IMR-90 (cell line): ENCODE measurements at regions of chr14 and their contacts with region 1.

Region 1: DNA sequence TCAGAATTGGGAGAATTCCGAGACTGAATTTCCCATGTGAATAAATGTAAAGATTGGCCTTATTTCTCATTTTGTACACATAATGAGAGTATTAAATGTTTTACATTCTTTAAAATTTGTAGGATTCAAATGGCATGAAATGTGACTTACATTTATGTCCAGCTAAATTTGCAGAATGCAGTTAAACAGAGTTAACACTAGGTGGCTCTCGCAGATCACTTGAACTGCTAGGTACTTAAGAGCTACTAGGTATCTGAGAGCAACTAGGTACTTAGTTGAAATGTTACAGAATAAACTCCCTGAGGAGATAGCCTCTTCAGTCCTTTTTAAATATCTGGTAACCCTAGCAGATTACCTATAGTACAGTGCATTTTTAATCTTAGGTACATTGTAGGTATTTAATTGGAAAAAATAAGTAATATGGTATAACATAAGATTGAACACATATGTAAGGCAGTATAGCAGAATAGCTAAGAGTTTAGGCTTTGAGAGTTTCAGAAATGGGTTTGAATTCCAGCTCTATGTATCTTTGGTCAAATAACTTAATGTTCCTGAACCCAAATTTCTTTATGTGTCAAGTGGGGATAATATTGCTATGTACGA is 73.8 kb downstream of the KIAA0586 start:
- DNase-seq: peak; percentile 88
- ATAC-seq: peak; percentile 89
- H3K4me3 ChIP-seq: no peak overlapping the region
- H3K27ac ChIP-seq: no peak overlapping the region
- H3K4me1 ChIP-seq: no peaks in the 10 kb centered on the region
- H3K27me3 ChIP-seq: no peaks in the 10 kb centered on the region
- CTCF ChIP-seq: peak; percentile 93
- POLR2A ChIP-seq: no peak
- RAD21 ChIP-seq: peak; percentile 96

Region 2: DNA sequence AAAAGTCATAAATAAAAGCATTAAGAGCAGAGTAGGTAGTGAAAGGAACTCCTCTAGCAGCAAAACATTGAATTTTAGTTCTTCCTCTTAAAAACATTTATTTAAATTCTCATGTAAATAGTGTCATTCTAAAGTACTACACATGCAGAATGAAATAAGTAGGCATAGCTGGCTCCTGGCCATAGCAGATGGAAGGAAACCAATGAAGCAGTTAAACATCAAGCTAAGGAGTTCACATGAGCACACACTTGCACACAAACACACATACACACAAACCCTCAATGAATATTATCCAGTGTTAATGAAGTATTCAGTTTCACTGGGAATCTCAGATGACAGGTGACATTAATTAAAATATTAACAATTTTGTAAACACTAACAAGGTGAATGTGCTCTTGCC is 704.8 kb before region 1 on chr14:
- CTCF ChIA-PET with region 1: no interaction called
- POLR2A ChIA-PET with region 1: no interaction called
- dilution Hi-C with region 1: no loop called
- in situ Hi-C with region 1: no loop called
- intact Hi-C with region 1: no loop called
- DNase-seq: no peak
- ATAC-seq: no peak
- H3K4me3 ChIP-seq: no peak overlapping the region
- H3K27ac ChIP-seq: no peak overlapping the region
- H3K4me1 ChIP-seq: no peaks in the 10 kb centered on the region
- H3K27me3 ChIP-seq: no peaks in the 10 kb centered on the region
- CTCF ChIP-seq: no peak
- POLR2A ChIP-seq: no peak
- RAD21 ChIP-seq: no peak

Region 3: GRCh38 chr14:58659846-58660245 is 158.5 kb after region 1 on chr14:
- CTCF ChIA-PET with region 1: no interaction called
- POLR2A ChIA-PET with region 1: no interaction called
- dilution Hi-C with region 1: no loop called
- in situ Hi-C with region 1: no loop called
- intact Hi-C with region 1: no loop called
- DNase-seq: no peak
- ATAC-seq: no peak
- H3K4me3 ChIP-seq: no peak overlapping the region
- H3K27ac ChIP-seq: no peak overlapping the region
- H3K4me1 ChIP-seq: peaks cover 4% of the 10 kb centered on the region; the same call in 1 of the 2 replicates
- H3K27me3 ChIP-seq: no peaks in the 10 kb centered on the region; the same call in 1 of the 2 replicates
- CTCF ChIP-seq: no peak
- POLR2A ChIP-seq: no peak
- RAD21 ChIP-seq: no peak

Region 4: GRCh38 chr14:59020382-59020781 is 519.1 kb after region 1 on chr14:
- CTCF ChIA-PET with region 1: no interaction called
- POLR2A ChIA-PET with region 1: no interaction called
- dilution Hi-C with region 1: no loop called
- in situ Hi-C with region 1: no loop called
- intact Hi-C with region 1: loop called (anchors 2 kb)
- DNase-seq: peak; percentile 46
- ATAC-seq: peak; percentile 86
- H3K4me3 ChIP-seq: no peak overlapping the region
- H3K27ac ChIP-seq: no peak overlapping the region
- H3K4me1 ChIP-seq: no peaks in the 10 kb centered on the region
- H3K27me3 ChIP-seq: no peaks in the 10 kb centered on the region
- CTCF ChIP-seq: peak; percentile 56
- POLR2A ChIP-seq: no peak
- RAD21 ChIP-seq: peak; percentile 55

Region 5: DNA sequence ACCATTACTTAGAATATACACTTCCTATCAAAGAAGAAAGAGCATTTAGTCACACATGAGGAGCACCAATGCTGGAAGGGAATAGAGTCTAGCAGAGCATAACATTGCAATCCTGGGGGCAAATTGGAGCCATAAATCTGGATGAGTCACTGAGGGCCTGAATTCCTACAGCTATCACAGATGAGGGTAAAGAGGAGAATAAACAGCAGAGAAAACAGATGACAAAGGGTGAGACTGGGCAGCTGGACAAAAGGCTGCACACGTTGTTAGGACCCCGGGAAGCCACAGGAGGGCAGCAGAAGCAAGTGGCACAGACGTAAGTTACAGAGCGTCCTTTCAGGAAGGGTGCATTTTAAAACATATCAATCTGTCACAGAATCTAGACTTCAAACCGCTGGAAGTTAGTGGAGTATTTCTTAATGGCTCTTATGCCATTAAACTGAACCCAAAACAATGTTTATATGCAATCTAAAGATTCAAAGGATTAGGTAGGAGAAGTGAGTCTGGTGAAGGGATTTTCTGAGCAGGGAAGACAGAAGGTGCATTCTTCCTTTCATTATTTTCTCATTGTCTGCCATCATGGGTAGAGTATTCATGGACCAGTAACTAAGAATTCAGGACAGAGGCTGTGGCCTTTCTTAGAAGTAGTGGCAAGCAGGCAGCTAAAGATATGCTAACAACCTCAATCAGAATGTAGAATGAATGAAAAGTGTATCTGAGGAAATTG is 527.3 kb after region 1 on chr14:
- CTCF ChIA-PET with region 1: no interaction called
- POLR2A ChIA-PET with region 1: no interaction called
- dilution Hi-C with region 1: no loop called
- in situ Hi-C with region 1: no loop called
- intact Hi-C with region 1: loop called (anchors 2 kb)
- DNase-seq: peak; percentile 97
- ATAC-seq: peak; percentile 99
- H3K4me3 ChIP-seq: no peak overlapping the region
- H3K27ac ChIP-seq: no peak overlapping the region
- H3K4me1 ChIP-seq: no peaks in the 10 kb centered on the region
- H3K27me3 ChIP-seq: no peaks in the 10 kb centered on the region
- CTCF ChIP-seq: peak; percentile 95
- POLR2A ChIP-seq: no peak
- RAD21 ChIP-seq: peak; percentile 89

Region 6: DNA sequence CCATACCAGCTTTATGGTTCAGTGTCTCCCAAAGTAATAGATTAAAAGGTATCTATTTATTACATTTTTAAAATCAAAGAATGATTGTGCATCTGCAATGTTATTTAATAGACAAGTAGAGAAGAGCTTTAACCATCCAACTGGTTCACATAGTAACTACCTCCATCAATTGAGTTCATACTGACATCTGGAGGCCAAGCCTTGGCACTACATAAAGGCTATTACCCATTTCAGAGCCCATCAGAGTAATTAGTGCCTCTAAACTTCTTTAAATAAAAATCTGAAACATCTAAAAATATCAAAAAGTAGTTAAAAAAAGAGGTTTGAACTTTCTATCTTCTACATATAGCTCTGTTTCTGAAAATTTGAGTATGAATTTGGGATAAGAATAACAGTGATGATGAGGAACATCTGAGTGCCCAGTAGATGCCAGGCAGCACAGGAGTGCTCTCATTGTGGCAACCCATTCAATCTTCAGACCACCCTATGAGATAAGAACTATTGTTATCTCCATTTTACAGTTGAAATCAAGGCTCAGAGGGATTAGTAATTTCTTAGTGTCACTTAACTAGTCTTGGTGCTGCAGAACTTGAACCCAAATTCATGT is 554.2 kb after region 1 on chr14:
- CTCF ChIA-PET with region 1: interaction called, 15 read pairs
- POLR2A ChIA-PET with region 1: no interaction called
- dilution Hi-C with region 1: no loop called
- in situ Hi-C with region 1: loop called (anchors 10 kb)
- intact Hi-C with region 1: loop called (anchors 1 kb)
- DNase-seq: peak; percentile 72
- ATAC-seq: peak; percentile 93
- H3K4me3 ChIP-seq: no peak overlapping the region
- H3K27ac ChIP-seq: no peak overlapping the region
- H3K4me1 ChIP-seq: no peaks in the 10 kb centered on the region
- H3K27me3 ChIP-seq: peaks cover 1% of the 10 kb centered on the region; the same call in 1 of the 2 replicates
- CTCF ChIP-seq: peak; percentile 88
- POLR2A ChIP-seq: no peak
- RAD21 ChIP-seq: peak; percentile 91

Region 7: DNA sequence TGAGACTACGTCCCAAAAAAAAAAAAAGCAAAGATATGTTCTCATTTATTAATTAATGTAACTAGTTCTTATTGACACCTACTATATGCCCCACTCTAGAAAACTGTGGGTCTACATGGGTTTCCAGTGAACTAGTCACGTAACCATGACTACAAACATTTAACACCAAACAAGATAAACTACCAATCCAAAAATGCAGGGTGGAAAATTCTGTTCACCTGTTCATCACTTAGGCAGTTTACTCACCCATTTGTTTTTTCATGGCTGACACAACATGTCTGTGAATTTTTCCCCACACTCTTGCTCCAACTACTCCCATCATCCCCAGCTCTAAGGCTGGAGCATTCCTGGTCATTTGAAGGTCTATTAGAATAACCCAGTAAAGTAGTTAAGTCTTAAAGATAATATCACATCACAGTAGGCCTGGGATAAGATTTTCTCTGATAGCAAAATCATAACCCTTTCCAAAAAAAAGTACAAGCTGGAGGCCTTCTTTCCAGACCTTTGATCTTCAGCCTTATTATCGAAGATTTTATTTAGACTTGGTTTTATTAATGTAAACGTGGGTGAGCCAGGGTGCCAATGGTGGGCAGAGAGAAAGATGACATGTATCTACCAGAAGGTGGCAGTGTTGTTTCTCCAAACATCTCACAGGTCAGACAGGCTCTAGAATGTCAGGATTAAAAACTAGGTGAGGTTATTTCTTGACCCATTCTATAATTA is 625.6 kb after region 1 on chr14:
- CTCF ChIA-PET with region 1: interaction called, 5 read pairs
- POLR2A ChIA-PET with region 1: no interaction called
- dilution Hi-C with region 1: no loop called
- in situ Hi-C with region 1: loop called (anchors 5 kb)
- intact Hi-C with region 1: loop called (anchors 2 kb)
- DNase-seq: peak; percentile 64
- ATAC-seq: peak; percentile 90
- H3K4me3 ChIP-seq: no peak overlapping the region
- H3K27ac ChIP-seq: no peak overlapping the region
- H3K4me1 ChIP-seq: no peaks in the 10 kb centered on the region; the same call in 1 of the 2 replicates
- H3K27me3 ChIP-seq: peaks cover 2% of the 10 kb centered on the region; the same call in 1 of the 2 replicates
- CTCF ChIP-seq: peak; percentile 81
- POLR2A ChIP-seq: no peak
- RAD21 ChIP-seq: peak; percentile 94